ENCODE measurements at regions of chr2 and their contacts with region 1.

Region 1: DNA sequence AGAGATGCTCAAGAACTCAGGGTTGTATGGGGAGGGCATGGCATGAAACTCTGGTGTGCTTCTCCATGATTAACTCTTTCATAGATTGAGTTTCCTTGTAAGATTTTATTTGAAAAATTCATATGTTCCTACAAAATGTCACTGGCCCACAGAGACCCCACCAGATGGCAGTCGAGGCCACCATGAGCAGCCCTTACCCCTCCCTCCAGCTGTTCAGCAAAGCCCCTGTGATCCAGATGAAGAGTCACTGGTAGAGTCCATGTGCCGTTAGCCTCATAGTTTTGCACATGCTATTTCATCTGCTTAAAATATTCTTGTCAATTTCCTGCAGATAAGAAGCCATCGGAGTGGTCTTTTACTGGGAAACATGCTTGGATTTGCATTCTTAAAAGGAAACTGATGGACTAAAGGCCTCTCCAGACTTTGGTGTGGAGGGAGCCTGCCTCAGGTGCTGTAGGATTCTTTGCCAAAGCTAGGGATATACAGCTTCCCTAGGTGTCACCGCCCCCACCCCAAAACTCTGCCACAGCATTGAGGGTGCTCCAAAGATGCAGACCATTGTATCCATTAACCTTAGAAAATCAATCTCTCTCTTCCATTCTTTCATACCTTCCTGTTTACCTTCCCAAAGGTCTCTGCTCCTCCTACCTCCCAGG is 18.8 kb downstream of the ZNF385B start:
- DNase-seq: peak; percentile 70
- H3K4me3 ChIP-seq: no peak overlapping the region
- H3K27ac ChIP-seq: no peak overlapping the region
- H3K4me1 ChIP-seq: peaks cover 0 to 2% of the 10 kb centered on the region in 2 experiments; a peak in 2 of 4 replicates
- H3K27me3 ChIP-seq: no peaks in the 10 kb centered on the region; the same call in 1 of the 2 replicates
- CTCF ChIP-seq: peak; percentile 63
- EP300 ChIP-seq: no peak
- RAD21 ChIP-seq: peak; percentile 85

Region 2: DNA sequence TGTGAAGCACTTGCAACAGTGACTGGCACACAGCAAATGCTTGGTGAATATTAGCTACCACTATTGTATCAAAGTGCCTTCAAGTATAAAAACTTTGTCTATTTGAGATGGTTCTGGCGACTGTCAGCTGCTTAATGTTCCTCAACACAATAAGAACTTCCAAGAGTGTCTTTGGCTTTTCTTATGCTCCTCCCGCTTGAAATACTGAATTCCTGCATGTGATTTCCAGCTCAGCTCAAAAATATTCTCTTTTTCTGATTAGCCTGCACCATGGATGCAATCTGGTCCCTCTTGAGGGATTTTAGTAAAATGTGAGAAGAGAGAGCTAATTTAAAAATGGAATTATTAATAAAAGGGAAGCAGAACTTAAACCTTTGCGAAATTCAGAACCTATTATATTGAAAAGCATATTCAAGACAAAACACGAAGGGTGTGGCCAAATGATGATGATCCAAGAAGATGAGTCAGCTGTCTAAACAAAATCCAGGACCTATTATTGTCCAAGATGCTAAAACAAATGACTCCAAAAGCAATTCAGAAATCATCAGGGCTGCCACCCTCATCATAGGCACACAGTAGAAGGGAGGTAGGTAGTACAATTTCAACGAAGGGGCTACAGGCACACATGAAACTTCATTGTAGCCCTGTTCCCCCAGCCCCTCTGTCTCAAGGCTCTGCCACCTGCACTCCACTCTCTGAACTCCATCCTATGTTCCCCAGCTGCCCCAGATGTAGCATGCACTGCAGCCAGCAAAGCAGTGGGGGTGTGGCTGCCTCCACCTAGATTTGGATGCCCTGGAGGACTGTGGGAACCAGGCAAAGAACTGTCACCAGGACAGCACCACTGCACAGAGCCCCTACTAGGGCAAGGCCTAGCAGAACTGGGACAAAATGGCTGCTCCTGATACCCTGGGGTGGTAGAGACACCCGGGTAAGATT is 171.3 kb before region 1 on chr2:
- CTCF ChIA-PET with region 1: no interaction called
- POLR2A ChIA-PET with region 1: no interaction called
- DNase-seq: no peak
- H3K4me3 ChIP-seq: no peak overlapping the region
- H3K27ac ChIP-seq: no peak overlapping the region
- H3K4me1 ChIP-seq: peaks cover 0 to 1% of the 10 kb centered on the region in 2 experiments; a peak in 1 of 4 replicates
- H3K27me3 ChIP-seq: no peaks in the 10 kb centered on the region
- CTCF ChIP-seq: no peak
- EP300 ChIP-seq: no peak
- RAD21 ChIP-seq: no peak

Region 3: DNA sequence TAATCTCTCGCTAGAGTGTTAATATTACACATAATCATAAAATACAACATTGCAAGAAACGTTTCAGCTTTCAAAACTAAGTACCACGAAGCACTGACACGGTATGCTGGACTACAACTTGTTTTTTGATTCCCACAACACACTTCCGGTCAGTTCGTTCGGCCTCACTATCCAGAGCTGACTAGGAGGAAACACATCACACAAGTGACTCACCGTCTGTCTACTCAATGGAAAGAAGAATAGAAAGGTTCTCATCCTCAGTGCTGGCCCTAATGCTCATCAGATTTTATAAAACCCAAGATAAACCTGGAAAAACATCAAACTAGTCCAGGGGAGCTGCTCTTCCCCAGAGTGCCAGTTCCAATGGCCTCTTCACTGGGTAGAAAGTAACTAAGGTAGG is 24.1 kb before region 1 on chr2:
- CTCF ChIA-PET with region 1: no interaction called
- POLR2A ChIA-PET with region 1: no interaction called
- DNase-seq: no peak
- H3K4me3 ChIP-seq: no peak overlapping the region
- H3K27ac ChIP-seq: peak overlapping the region in 1 of 2 experiments; percentile 22; a peak in 1 of 4 replicates
- H3K4me1 ChIP-seq: no peaks in the 10 kb centered on the region
- H3K27me3 ChIP-seq: no peaks in the 10 kb centered on the region
- CTCF ChIP-seq: no peak
- EP300 ChIP-seq: no peak
- RAD21 ChIP-seq: no peak

Region 4: DNA sequence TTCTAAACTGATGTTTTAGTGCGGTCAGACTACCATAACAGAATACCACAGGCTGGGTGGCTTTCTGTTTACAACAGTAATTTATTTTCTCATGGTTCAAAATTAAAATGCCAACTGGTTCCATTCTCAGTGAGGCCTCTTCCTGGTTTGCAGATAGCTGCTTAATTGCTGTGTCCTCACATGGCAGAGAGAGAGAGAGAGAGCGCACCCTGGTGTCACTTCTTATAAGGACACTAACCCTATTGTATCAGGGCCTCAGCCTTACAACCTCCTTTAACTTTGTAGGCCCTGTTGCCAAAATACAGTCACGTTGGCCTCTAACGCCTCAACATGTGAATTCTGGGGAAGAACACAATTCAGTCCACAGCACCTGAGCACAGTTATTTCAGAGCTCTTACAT is 56.2 kb after region 1 on chr2:
- CTCF ChIA-PET with region 1: interaction called, 26 read pairs
- POLR2A ChIA-PET with region 1: no interaction called
- DNase-seq: peak; percentile 23
- H3K4me3 ChIP-seq: no peak overlapping the region
- H3K27ac ChIP-seq: no peak overlapping the region
- H3K4me1 ChIP-seq: no peaks in the 10 kb centered on the region
- H3K27me3 ChIP-seq: no peaks in the 10 kb centered on the region
- CTCF ChIP-seq: peak; percentile 41; the same call in 1 of the 2 replicates
- EP300 ChIP-seq: no peak
- RAD21 ChIP-seq: peak; percentile 62

Region 5: DNA sequence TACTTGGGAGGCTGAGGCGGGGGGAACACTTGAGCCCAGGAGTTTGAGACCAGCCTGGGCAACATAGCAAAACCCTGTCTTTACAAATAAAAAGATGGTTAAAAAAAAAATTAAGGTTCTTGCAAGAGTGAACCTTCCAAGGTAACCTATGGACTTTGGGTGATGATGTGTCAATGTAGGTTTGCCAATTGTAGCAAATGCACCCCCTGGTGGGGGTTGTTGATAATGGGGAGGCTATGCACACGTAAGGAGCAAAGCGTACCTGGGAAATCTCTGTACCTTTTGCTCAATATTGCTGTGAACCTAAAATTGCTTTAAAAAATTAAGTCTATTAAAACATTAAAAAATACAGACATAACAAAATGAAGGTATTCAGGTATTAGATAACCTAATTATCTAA is 94.0 kb after region 1 on chr2:
- CTCF ChIA-PET with region 1: interaction called, 12 read pairs
- POLR2A ChIA-PET with region 1: no interaction called
- DNase-seq: peak; percentile 4
- H3K4me3 ChIP-seq: no peak overlapping the region
- H3K27ac ChIP-seq: no peak overlapping the region
- H3K4me1 ChIP-seq: no peaks in the 10 kb centered on the region
- H3K27me3 ChIP-seq: no peaks in the 10 kb centered on the region
- CTCF ChIP-seq: peak; percentile 57
- EP300 ChIP-seq: no peak
- RAD21 ChIP-seq: peak; percentile 30

Region 6: GRCh38 chr2:180071797-180072196 is 229.2 kb after region 1 on chr2:
- CTCF ChIA-PET with region 1: interaction called, 52 read pairs
- POLR2A ChIA-PET with region 1: no interaction called
- DNase-seq: no peak
- H3K4me3 ChIP-seq: no peak overlapping the region
- H3K27ac ChIP-seq: no peak overlapping the region
- H3K4me1 ChIP-seq: no peaks in the 10 kb centered on the region
- H3K27me3 ChIP-seq: no peaks in the 10 kb centered on the region
- CTCF ChIP-seq: no peak
- EP300 ChIP-seq: no peak
- RAD21 ChIP-seq: no peak

Region 7: GRCh38 chr2:180077295-180077906 is 234.8 kb after region 1 on chr2:
- CTCF ChIA-PET with region 1: interaction called, 52 read pairs
- POLR2A ChIA-PET with region 1: no interaction called
- DNase-seq: peak; percentile 24
- H3K4me3 ChIP-seq: no peak overlapping the region; a peak in 1 of 4 replicates
- H3K27ac ChIP-seq: no peak overlapping the region
- H3K4me1 ChIP-seq: no peaks in the 10 kb centered on the region
- H3K27me3 ChIP-seq: no peaks in the 10 kb centered on the region
- CTCF ChIP-seq: peak; percentile 93
- EP300 ChIP-seq: no peak
- RAD21 ChIP-seq: peak; percentile 77